Activated T-helper 2 cell treated with anti-CD3 and anti-CD28 coated beads, Interferon-gamma antibody, Interleukin-2, Interleukin-4, amounts not matched to agents 10 μg/mL and 5 μg/mL and 100 μg/mL, durations not matched to agents 14 hours and 24 hours and 36 hours (primary cell): ENCODE measurements at regions of chr2 and their contacts with region 1.

Region 1: DNA sequence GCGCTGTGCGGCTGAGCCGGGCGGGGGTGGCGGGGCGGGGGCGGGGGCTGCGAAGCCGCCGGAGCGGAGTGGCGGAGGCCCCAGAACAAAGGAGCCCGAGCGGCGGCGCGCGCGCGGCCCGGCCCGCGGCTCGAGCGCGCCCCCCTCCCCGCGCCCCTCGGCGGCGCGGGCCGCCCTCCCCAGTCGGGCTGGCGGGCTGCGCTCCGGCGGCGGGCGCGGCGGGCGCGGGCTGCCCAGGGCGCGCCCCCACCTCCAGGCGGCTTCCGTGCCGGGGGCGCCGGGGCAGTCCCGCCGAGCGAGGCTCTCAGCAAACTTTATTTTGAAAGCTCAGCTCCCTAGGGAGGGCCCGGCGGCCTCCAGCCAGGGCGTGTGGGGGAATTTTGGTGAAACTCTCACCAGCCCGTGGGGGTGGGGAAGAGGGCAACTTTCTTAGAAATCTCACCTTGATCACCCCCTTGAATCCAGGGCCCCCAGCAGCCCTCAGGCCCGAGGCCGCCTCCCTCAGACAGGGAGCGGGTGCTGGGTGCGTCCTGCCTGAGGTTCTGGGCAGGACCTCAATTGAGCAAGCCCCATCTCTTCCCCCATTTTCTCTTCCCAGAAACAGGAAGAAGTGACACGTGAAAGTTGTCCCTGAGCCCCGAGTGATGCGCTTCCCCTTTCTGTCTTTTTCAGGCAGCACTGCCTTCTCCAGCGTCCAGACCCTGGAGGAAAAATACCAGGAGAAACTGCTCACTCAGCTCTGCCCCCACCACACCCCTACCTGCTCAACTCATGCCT is 786 bp downstream of the TET3 start:
- DNase-seq: peak; percentile 40
- H3K4me3 Mint-ChIP-seq: peak overlapping the region; percentile 86
- H3K27ac Mint-ChIP-seq: peak overlapping the region; percentile 80
- H3K4me1 Mint-ChIP-seq: peaks cover 64% of the 10 kb centered on the region
- H3K27me3 Mint-ChIP-seq: no peaks in the 10 kb centered on the region

Region 2: GRCh38 chr2:73907840-73908452 is 77.5 kb before region 1 on chr2:
- intact Hi-C with region 1: loop called (anchors 1 kb)
- DNase-seq: peak; percentile 39
- H3K4me3 Mint-ChIP-seq: no peak overlapping the region
- H3K27ac Mint-ChIP-seq: peak overlapping the region; percentile 72
- H3K4me1 Mint-ChIP-seq: peaks cover 10% of the 10 kb centered on the region
- H3K27me3 Mint-ChIP-seq: no peaks in the 10 kb centered on the region

Region 3: DNA sequence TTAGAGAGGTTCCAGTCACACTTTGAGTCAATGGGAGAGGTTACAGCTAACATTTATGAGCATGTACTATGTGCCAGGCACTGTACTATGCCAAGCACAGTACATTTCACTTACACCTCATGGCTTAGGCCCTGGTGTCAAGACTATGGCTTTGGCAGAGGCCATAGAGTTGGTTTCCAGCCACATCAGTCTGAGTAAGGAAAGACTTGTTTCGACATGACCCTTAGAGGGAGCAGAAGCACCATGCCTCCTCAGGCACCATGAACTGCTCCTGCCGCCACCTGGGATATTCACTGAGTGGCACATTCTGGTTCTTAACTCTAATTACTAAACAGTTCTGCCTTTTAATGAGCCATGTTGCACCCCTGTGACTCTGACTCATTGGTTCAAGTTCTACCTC is 46.1 kb before region 1 on chr2:
- intact Hi-C with region 1: loop called (anchors 1 kb)
- DNase-seq: no peak
- H3K4me3 Mint-ChIP-seq: no peak overlapping the region
- H3K27ac Mint-ChIP-seq: no peak overlapping the region
- H3K4me1 Mint-ChIP-seq: peaks cover 62% of the 10 kb centered on the region
- H3K27me3 Mint-ChIP-seq: no peaks in the 10 kb centered on the region

Region 4: GRCh38 chr2:74002487-74003391 is 17.2 kb after region 1 on chr2:
- intact Hi-C with region 1: loop called (anchors 2 kb)
- DNase-seq: peak; percentile 76
- H3K4me3 Mint-ChIP-seq: peak overlapping the region; percentile 79
- H3K27ac Mint-ChIP-seq: no peak overlapping the region
- H3K4me1 Mint-ChIP-seq: peaks cover 69% of the 10 kb centered on the region
- H3K27me3 Mint-ChIP-seq: no peaks in the 10 kb centered on the region

Region 5: GRCh38 chr2:74178201-74179062 is 192.9 kb after region 1 on chr2 and contains the start of gene MOB1A:
- intact Hi-C with region 1: no loop called
- DNase-seq: peak; percentile 97
- H3K4me3 Mint-ChIP-seq: peak within 1 kb of the TSS; percentile 85
- H3K27ac Mint-ChIP-seq: peak within 1 kb of the TSS; percentile 81
- H3K4me1 Mint-ChIP-seq: peaks cover 40% of the 10 kb centered on the region
- H3K27me3 Mint-ChIP-seq: no peaks in the 10 kb centered on the region
- total RNA-seq, gene MOB1A: 208 and 215 TPM in 2 replicates

Region 6: DNA sequence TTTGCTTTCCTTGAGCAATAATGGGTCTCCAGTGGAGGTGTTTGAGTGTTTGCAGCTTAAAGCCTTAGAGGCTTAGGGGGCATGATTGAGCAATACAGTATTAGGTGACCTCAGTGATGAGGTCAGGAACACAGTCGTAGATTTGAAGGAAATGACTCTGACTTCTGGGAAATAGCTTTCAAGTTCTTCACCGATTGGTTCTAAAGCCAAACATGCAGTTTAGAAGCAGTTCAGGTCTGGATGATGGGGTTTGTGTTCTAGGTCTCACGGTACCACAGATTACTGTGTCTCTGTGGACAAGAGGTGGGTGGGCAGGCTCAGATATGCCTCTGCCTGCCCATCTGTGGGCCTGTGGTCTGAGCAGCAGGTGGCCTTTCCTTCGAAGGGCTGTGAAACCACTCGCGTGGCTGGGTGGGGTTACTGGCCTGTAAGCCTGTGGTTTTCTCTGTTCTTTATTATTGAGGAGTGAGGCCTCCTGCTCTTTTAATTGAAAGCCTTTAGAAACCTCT is 220.7 kb after region 1 on chr2:
- intact Hi-C with region 1: loop called (anchors 10 kb)
- DNase-seq: peak; percentile 48
- H3K4me3 Mint-ChIP-seq: peak overlapping the region; percentile 79
- H3K27ac Mint-ChIP-seq: peak overlapping the region; percentile 98
- H3K4me1 Mint-ChIP-seq: peaks cover 57% of the 10 kb centered on the region
- H3K27me3 Mint-ChIP-seq: no peaks in the 10 kb centered on the region